MCF 10A (cell line): ENCODE measurements at regions of chr5 and their contacts with region 1.

Region 1: GRCh38 chr5:111158105-111158744 is 66.0 kb upstream of the CAMK4 start:
- DNase-seq: peak; percentile 84
- H3K4me3 Mint-ChIP-seq: no peak overlapping the region
- H3K27ac Mint-ChIP-seq: no peak overlapping the region
- H3K4me1 Mint-ChIP-seq: no peaks in the 10 kb centered on the region
- H3K27me3 Mint-ChIP-seq: no peaks in the 10 kb centered on the region
- CTCF ChIP-seq: peak; percentile 99

Region 2: GRCh38 chr5:111278845-111279504 is 120.8 kb after region 1 on chr5:
- CTCF ChIA-PET with region 1: interaction called, 104 read pairs
- POLR2A ChIA-PET with region 1: interaction called, 3 read pairs
- intact Hi-C with region 1: loop called (anchors 1 kb)
- DNase-seq: peak; percentile 74
- H3K4me3 Mint-ChIP-seq: no peak overlapping the region
- H3K27ac Mint-ChIP-seq: no peak overlapping the region
- H3K4me1 Mint-ChIP-seq: no peaks in the 10 kb centered on the region
- H3K27me3 Mint-ChIP-seq: peaks cover 18% of the 10 kb centered on the region
- CTCF ChIP-seq: peak; percentile 84

Region 3: GRCh38 chr5:111401906-111402305 is 243.7 kb after region 1 on chr5:
- CTCF ChIA-PET with region 1: no interaction called
- POLR2A ChIA-PET with region 1: no interaction called
- intact Hi-C with region 1: loop called (anchors 5 kb)
- DNase-seq: no peak
- H3K4me3 Mint-ChIP-seq: no peak overlapping the region
- H3K27ac Mint-ChIP-seq: no peak overlapping the region
- H3K4me1 Mint-ChIP-seq: no peaks in the 10 kb centered on the region
- H3K27me3 Mint-ChIP-seq: no peaks in the 10 kb centered on the region
- CTCF ChIP-seq: no peak

Region 4: GRCh38 chr5:111478266-111478665 is 320.0 kb after region 1 on chr5:
- CTCF ChIA-PET with region 1: interaction called, 11 read pairs
- POLR2A ChIA-PET with region 1: no interaction called
- intact Hi-C with region 1: loop called (anchors 1 kb)
- DNase-seq: no peak
- H3K4me3 Mint-ChIP-seq: no peak overlapping the region
- H3K27ac Mint-ChIP-seq: no peak overlapping the region
- H3K4me1 Mint-ChIP-seq: no peaks in the 10 kb centered on the region
- H3K27me3 Mint-ChIP-seq: no peaks in the 10 kb centered on the region
- CTCF ChIP-seq: no peak

Region 5: DNA sequence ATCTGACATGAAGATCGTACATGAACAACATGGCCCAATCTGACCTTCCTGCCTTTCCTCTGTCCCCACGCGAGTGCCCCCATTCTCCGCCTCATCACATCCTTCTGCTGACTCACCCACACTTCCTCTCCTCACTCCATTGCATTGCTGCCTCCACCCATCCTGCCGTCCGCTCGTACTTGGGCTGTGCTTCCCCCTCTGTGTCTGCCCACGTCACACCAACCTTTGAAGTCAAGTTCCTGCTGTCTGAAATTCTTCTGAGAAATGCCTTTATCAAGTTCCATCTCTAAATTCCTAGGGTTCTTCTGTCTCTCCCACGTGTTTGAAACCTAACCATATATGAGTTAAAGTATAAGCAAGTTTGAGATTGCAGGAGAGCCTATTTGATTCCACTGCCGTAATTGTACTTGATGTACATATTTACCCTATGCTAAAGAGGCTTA is 372.1 kb after region 1 on chr5:
- CTCF ChIA-PET with region 1: interaction called, 11 read pairs
- POLR2A ChIA-PET with region 1: no interaction called
- intact Hi-C with region 1: no loop called
- DNase-seq: peak; percentile 34
- H3K4me3 Mint-ChIP-seq: peak overlapping the region; percentile 0
- H3K27ac Mint-ChIP-seq: peak overlapping the region; percentile 3
- H3K4me1 Mint-ChIP-seq: peaks cover 8% of the 10 kb centered on the region
- H3K27me3 Mint-ChIP-seq: no peaks in the 10 kb centered on the region
- CTCF ChIP-seq: no peak

Region 6: GRCh38 chr5:112160652-112161391 is 1002.6 kb after region 1 on chr5:
- CTCF ChIA-PET with region 1: no interaction called
- POLR2A ChIA-PET with region 1: no interaction called
- intact Hi-C with region 1: loop called (anchors 5 kb)
- DNase-seq: peak; percentile 90
- H3K4me3 Mint-ChIP-seq: peak overlapping the region; percentile 95
- H3K27ac Mint-ChIP-seq: peak overlapping the region; percentile 92
- H3K4me1 Mint-ChIP-seq: peaks cover 24% of the 10 kb centered on the region
- H3K27me3 Mint-ChIP-seq: no peaks in the 10 kb centered on the region
- CTCF ChIP-seq: peak; percentile 97